ENCODE measurements at regions of chr6 and their contacts with region 1.

Region 1: GRCh38 chr6:132785936-132786335 is 12.5 kb downstream of the SLC18B1 start:
- DNase-seq: no peak
- ATAC-seq: no peak
- H3K4me3 Mint-ChIP-seq: no peak overlapping the region
- H3K27ac Mint-ChIP-seq: no peak overlapping the region
- H3K4me1 Mint-ChIP-seq: peaks cover 0 to 4% (median 3%) of the 10 kb centered on the region in 4 donors
- H3K27me3 Mint-ChIP-seq: no peaks in the 10 kb centered on the region

Region 2: GRCh38 chr6:132659082-132659481 is 126.9 kb before region 1 on chr6 and contains the start of gene TAAR1:
- POLR2A ChIA-PET with region 1: no interaction called
- DNase-seq: no peak
- ATAC-seq: no peak
- H3K4me3 Mint-ChIP-seq: no peak within 1 kb of the TSS
- H3K27ac Mint-ChIP-seq: peak within 1 kb of the TSS in 1 of 10 donors; percentile 55
- H3K4me1 Mint-ChIP-seq: peaks cover 0 to 3% (median 0%) of the 10 kb centered on the region in 4 donors
- H3K27me3 Mint-ChIP-seq: peaks cover 0 to 2% (median 0%) of the 10 kb centered on the region in 5 donors
- polyA plus RNA-seq, gene TAAR1: not detected

Region 3: GRCh38 chr6:132768051-132768517 is 17.9 kb before region 1 on chr6:
- POLR2A ChIA-PET with region 1: interaction called, 10 read pairs
- DNase-seq: peak in 6 of 10 donors; percentile 3 to 59 (median 6)
- ATAC-seq: peak; percentile 43 to 46
- H3K4me3 Mint-ChIP-seq: no peak overlapping the region
- H3K27ac Mint-ChIP-seq: peak overlapping the region in 2 of 10 donors; percentile 4 to 24
- H3K4me1 Mint-ChIP-seq: peaks cover 4 to 22% (median 17%) of the 10 kb centered on the region in 4 donors
- H3K27me3 Mint-ChIP-seq: no peaks in the 10 kb centered on the region

Region 4: GRCh38 chr6:132872923-132873322 is 87.0 kb after region 1 on chr6:
- POLR2A ChIA-PET with region 1: no interaction called
- DNase-seq: no peak
- ATAC-seq: no peak
- H3K4me3 Mint-ChIP-seq: no peak overlapping the region
- H3K27ac Mint-ChIP-seq: no peak overlapping the region
- H3K4me1 Mint-ChIP-seq: no peaks in the 10 kb centered on the region
- H3K27me3 Mint-ChIP-seq: peaks cover 2 to 13% (median 6%) of the 10 kb centered on the region in 5 donors

Measured in naive thymus-derived CD8-positive, alpha-beta T cell (primary cell).